ENCODE measurements at regions of chr9 and their contacts with region 1.

Region 1: GRCh38 chr9:33924978-33925797 is 108.2 kb downstream of the UBE2R2 start:
- DNase-seq: peak in 1 of 2 donors; percentile 68
- ATAC-seq: peak; percentile 70
- H3K4me3 ChIP-seq: no peak overlapping the region
- H3K27ac ChIP-seq: peak overlapping the region in 1 of 2 donors; percentile 27
- H3K4me1 ChIP-seq: no peaks in the 10 kb centered on the region
- H3K27me3 ChIP-seq: no peaks in the 10 kb centered on the region

Region 2: GRCh38 chr9:33709269-33709668 is 215.9 kb before region 1 on chr9:
- intact Hi-C with region 1: no loop called
- DNase-seq: no peak
- ATAC-seq: no peak
- H3K4me3 ChIP-seq: no peak overlapping the region
- H3K27ac ChIP-seq: no peak overlapping the region
- H3K4me1 ChIP-seq: no peaks in the 10 kb centered on the region
- H3K27me3 ChIP-seq: no peaks in the 10 kb centered on the region

Region 3: DNA sequence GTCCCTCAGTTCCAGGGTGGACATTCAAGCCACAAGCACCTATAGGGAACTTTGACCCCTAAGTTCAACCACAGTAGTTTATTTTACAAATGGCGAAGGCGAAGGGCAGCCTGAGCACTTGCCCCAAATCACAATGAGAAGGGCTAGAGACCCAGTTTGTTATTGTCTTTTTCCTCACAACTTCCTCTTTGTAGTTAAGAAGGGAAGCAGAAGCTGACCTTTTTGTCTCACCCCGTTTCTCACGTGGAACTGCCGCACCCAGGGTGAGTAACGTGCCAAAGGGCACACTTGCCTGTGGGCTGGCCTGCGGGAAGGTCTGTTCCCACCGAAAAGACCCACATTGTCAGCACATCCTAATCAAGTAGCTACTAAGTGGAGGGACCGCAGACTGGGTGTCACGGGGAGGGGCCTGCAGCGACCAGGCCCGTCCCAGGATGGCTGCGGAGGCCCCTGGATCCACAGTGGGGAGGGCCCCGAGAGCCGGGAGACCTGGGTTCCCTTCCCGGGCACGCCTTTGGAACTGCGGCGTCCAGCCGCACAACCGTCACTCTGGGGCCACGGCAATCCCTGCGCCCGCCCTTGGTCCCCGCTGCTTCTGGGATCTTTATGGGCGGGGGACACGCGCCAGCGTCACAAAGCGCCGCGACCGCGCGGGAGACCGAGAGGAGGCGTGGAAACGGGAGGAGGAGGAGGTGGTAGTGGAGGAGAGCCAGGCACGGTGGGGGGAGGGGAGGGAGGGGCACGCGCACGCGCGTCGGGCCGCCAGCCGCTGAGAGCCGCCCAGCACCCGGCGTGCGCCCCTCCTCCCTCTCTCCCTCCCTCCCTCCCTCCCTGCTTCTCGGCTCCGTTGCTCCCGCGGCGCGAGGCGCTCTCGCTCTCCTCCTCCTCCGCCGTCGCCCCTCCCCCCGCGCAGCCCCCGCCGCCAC is 108.6 kb before region 1 on chr9 and contains the start of gene UBE2R2:
- intact Hi-C with region 1: loop called in 1 of 2 experiments (anchors 10 kb)
- DNase-seq: peak; percentile 94 to 97
- ATAC-seq: peak; percentile 96
- H3K4me3 ChIP-seq: peak within 1 kb of the TSS; percentile 73 to 98
- H3K27ac ChIP-seq: peak within 1 kb of the TSS; percentile 79 to 93
- H3K4me1 ChIP-seq: no peaks in the 10 kb centered on the region
- H3K27me3 ChIP-seq: no peaks in the 10 kb centered on the region
- total RNA-seq, gene UBE2R2: 34.3 to 35.4 TPM

Region 4: GRCh38 chr9:34025062-34025461 is 99.9 kb after region 1 on chr9:
- intact Hi-C with region 1: loop called in 1 of 2 experiments (anchors 10 kb)
- DNase-seq: no peak
- ATAC-seq: no peak
- H3K4me3 ChIP-seq: no peak overlapping the region
- H3K27ac ChIP-seq: no peak overlapping the region
- H3K4me1 ChIP-seq: no peaks in the 10 kb centered on the region
- H3K27me3 ChIP-seq: no peaks in the 10 kb centered on the region

Region 5: GRCh38 chr9:34072868-34073590 is 147.8 kb after region 1 on chr9:
- intact Hi-C with region 1: loop called in 1 of 2 experiments (anchors 10 kb)
- DNase-seq: peak in 1 of 2 donors; percentile 28
- ATAC-seq: peak; percentile 48
- H3K4me3 ChIP-seq: no peak overlapping the region
- H3K27ac ChIP-seq: peak overlapping the region in 1 of 2 donors; percentile 61
- H3K4me1 ChIP-seq: peaks cover 0 to 2% of the 10 kb centered on the region in 2 donors
- H3K27me3 ChIP-seq: no peaks in the 10 kb centered on the region